ENCODE measurements at regions of chr6 and their contacts with region 1.

Region 1: DNA sequence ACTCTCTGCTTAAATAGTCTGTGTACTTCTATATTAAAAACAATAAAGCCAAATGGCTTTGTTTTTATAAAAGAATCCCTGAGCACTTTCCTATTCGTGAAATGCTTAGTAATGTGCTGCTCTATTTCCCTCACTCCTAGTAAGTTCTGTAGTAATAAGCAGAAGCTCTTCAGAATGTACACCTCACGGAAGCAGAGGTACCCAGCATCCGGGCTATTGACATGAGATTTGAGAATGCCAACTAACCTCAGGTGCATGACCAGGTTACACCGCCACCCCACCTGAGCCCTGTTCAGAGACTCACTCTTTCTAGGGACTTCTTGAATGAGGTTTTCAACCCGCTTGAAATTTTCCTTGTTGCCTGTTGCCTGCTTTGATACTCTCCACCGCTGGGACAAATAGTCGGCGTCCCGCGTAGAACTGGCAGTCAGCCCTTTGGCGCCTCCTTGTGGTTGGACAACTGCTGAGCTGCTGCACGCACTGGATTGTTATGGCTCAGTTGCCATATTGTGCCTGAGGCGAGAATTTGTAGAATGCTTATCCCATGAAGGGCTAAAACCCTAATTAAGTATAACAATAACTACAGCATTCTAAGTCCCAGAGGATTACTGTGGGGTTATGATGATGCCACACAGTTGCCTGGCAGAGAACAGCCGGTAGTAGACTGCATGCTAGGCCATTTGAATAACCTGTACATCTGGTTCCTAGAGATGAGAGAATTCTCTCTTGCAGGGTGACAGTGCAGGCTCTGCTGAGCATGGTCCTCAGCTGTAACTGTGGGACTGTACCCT is 95.4 kb downstream of the KHDC1L start:
- DNase-seq: peak; percentile 39
- ATAC-seq: peak; percentile 99
- H3K4me3 ChIP-seq: no peak overlapping the region
- H3K27ac ChIP-seq: no peak overlapping the region
- H3K4me1 ChIP-seq: no peaks in the 10 kb centered on the region
- H3K27me3 ChIP-seq: no peaks in the 10 kb centered on the region
- CTCF ChIP-seq: peak; percentile 95 to 99 (median 96)
- EP300 ChIP-seq: no peak
- POLR2A ChIP-seq: no peak
- RAD21 ChIP-seq: peak; percentile 99

Region 2: GRCh38 chr6:72411872-72412708 is 717.8 kb before region 1 on chr6:
- CTCF ChIA-PET with region 1: interaction called, 15 read pairs
- POLR2A ChIA-PET with region 1: no interaction called
- RAD21 ChIA-PET with region 1: interaction called, 31 read pairs
- SMC1A ChIA-PET with region 1: interaction called, 31 read pairs
- in situ Hi-C with region 1: loop called (anchors 5 kb)
- intact Hi-C with region 1: loop called (anchors 1 kb)
- DNase-seq: peak; percentile 59
- ATAC-seq: peak; percentile 87
- H3K4me3 ChIP-seq: no peak overlapping the region
- H3K27ac ChIP-seq: no peak overlapping the region
- H3K4me1 ChIP-seq: no peaks in the 10 kb centered on the region
- H3K27me3 ChIP-seq: peaks cover 1 to 3% of the 10 kb centered on the region in 2 experiments; a peak in 2 of 4 replicates
- CTCF ChIP-seq: peak; percentile 100; a peak in 5 of 6 replicates
- EP300 ChIP-seq: no peak
- POLR2A ChIP-seq: no peak
- RAD21 ChIP-seq: peak; percentile 98

Region 3: GRCh38 chr6:72636215-72636614 is 493.6 kb before region 1 on chr6:
- CTCF ChIA-PET with region 1: interaction called, 22 read pairs
- POLR2A ChIA-PET with region 1: no interaction called
- RAD21 ChIA-PET with region 1: interaction called, 41 read pairs
- SMC1A ChIA-PET with region 1: interaction called, 38 read pairs
- in situ Hi-C with region 1: no loop called
- intact Hi-C with region 1: loop called (anchors 1 kb)
- DNase-seq: peak; percentile 60
- ATAC-seq: peak; percentile 83
- H3K4me3 ChIP-seq: peak overlapping the region; percentile 1; the same call in 1 of the 2 replicates
- H3K27ac ChIP-seq: peak overlapping the region; percentile 21
- H3K4me1 ChIP-seq: peaks cover 14% of the 10 kb centered on the region
- H3K27me3 ChIP-seq: no peaks in the 10 kb centered on the region
- CTCF ChIP-seq: no peak
- EP300 ChIP-seq: peak in 1 of 2 experiments; percentile 43; a peak in 1 of 4 replicates
- POLR2A ChIP-seq: no peak
- RAD21 ChIP-seq: no peak

Region 4: GRCh38 chr6:72894091-72894490 is 235.8 kb before region 1 on chr6:
- CTCF ChIA-PET with region 1: no interaction called
- POLR2A ChIA-PET with region 1: no interaction called
- RAD21 ChIA-PET with region 1: no interaction called
- SMC1A ChIA-PET with region 1: no interaction called
- in situ Hi-C with region 1: no loop called
- intact Hi-C with region 1: no loop called
- DNase-seq: no peak
- ATAC-seq: no peak
- H3K4me3 ChIP-seq: no peak overlapping the region
- H3K27ac ChIP-seq: no peak overlapping the region
- H3K4me1 ChIP-seq: no peaks in the 10 kb centered on the region
- H3K27me3 ChIP-seq: no peaks in the 10 kb centered on the region
- CTCF ChIP-seq: no peak
- EP300 ChIP-seq: no peak
- POLR2A ChIP-seq: no peak
- RAD21 ChIP-seq: no peak

Region 5: DNA sequence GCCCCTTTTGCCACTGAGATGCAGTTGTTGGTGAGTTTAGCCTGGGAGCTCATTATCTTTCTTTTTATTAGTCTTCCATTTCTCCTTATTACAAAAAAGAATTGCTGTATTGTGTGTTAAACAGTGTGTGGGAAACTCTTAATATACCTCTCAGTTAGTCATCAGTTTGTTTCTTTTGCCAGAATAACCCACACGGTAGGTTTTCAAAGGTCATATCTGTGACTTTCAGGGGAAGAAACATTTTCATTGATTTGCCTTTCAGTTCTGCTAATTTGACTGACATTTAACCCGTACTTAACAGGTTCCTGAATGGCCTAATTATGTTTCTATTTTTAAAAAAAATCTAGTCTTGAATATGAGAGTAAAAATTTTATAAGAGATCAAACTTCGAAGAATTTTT is 49.9 kb before region 1 on chr6:
- CTCF ChIA-PET with region 1: interaction called, 12 read pairs
- POLR2A ChIA-PET with region 1: no interaction called
- RAD21 ChIA-PET with region 1: interaction called, 4 read pairs
- SMC1A ChIA-PET with region 1: interaction called, 12 read pairs
- in situ Hi-C with region 1: no loop called
- intact Hi-C with region 1: no loop called
- DNase-seq: peak; percentile 33
- ATAC-seq: peak; percentile 89
- H3K4me3 ChIP-seq: no peak overlapping the region
- H3K27ac ChIP-seq: peak overlapping the region; percentile 55; the same call in 1 of the 2 replicates
- H3K4me1 ChIP-seq: peaks cover 3% of the 10 kb centered on the region; the same call in 1 of the 2 replicates
- H3K27me3 ChIP-seq: no peaks in the 10 kb centered on the region
- CTCF ChIP-seq: no peak
- EP300 ChIP-seq: peak; percentile 73 to 76; a peak in 2 of 4 replicates
- POLR2A ChIP-seq: no peak
- RAD21 ChIP-seq: no peak

Region 6: DNA sequence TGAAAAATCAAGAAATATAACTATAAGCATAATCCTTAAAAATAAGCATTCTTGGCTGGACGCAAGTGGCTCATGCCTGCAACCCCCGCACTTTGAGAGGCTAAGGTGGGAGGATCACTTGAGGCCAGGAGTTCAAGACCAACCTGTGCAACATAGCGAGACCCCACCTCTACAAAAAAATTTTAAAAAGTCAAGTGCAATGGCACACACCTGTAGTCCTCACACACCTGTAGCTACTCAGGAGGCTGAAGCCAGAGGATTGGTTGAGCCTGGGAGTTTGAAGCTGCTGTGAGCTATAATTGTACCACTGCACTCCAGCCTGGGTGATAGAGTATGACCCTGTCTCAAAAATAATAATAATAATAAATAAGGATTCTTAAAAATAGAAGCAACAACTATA is 13.5 kb before region 1 on chr6:
- CTCF ChIA-PET with region 1: interaction called, 27 read pairs
- POLR2A ChIA-PET with region 1: no interaction called
- RAD21 ChIA-PET with region 1: interaction called, 3 read pairs
- SMC1A ChIA-PET with region 1: interaction called, 8 read pairs
- in situ Hi-C with region 1: no loop called
- intact Hi-C with region 1: no loop called
- DNase-seq: no peak
- ATAC-seq: no peak
- H3K4me3 ChIP-seq: no peak overlapping the region
- H3K27ac ChIP-seq: no peak overlapping the region
- H3K4me1 ChIP-seq: no peaks in the 10 kb centered on the region
- H3K27me3 ChIP-seq: no peaks in the 10 kb centered on the region
- CTCF ChIP-seq: no peak
- EP300 ChIP-seq: no peak
- POLR2A ChIP-seq: no peak
- RAD21 ChIP-seq: no peak

Region 7: GRCh38 chr6:73180763-73181619 is 51.1 kb after region 1 on chr6:
- CTCF ChIA-PET with region 1: interaction called, 29 read pairs
- POLR2A ChIA-PET with region 1: no interaction called
- RAD21 ChIA-PET with region 1: interaction called, 3 read pairs
- SMC1A ChIA-PET with region 1: interaction called, 6 read pairs
- in situ Hi-C with region 1: no loop called
- intact Hi-C with region 1: loop called (anchors 2 kb)
- DNase-seq: peak; percentile 53
- ATAC-seq: peak; percentile 94
- H3K4me3 ChIP-seq: peak overlapping the region; percentile 25; the same call in 1 of the 2 replicates
- H3K27ac ChIP-seq: no peak overlapping the region
- H3K4me1 ChIP-seq: peaks cover 23% of the 10 kb centered on the region
- H3K27me3 ChIP-seq: no peaks in the 10 kb centered on the region
- CTCF ChIP-seq: peak; percentile 79 to 91 (median 85)
- EP300 ChIP-seq: no peak
- POLR2A ChIP-seq: no peak
- RAD21 ChIP-seq: peak; percentile 97

Region 8: GRCh38 chr6:73236147-73236750 is 106.4 kb after region 1 on chr6:
- CTCF ChIA-PET with region 1: no interaction called
- POLR2A ChIA-PET with region 1: no interaction called
- RAD21 ChIA-PET with region 1: no interaction called
- SMC1A ChIA-PET with region 1: no interaction called
- in situ Hi-C with region 1: no loop called
- intact Hi-C with region 1: no loop called
- DNase-seq: no peak
- ATAC-seq: no peak
- H3K4me3 ChIP-seq: no peak overlapping the region
- H3K27ac ChIP-seq: no peak overlapping the region
- H3K4me1 ChIP-seq: no peaks in the 10 kb centered on the region
- H3K27me3 ChIP-seq: no peaks in the 10 kb centered on the region
- CTCF ChIP-seq: no peak
- EP300 ChIP-seq: no peak
- POLR2A ChIP-seq: no peak
- RAD21 ChIP-seq: no peak

Measured in GM12878 (cell line).